Sigmoid colon (tissue), 7 donors: ENCODE measurements at regions of chr4 and their contacts with region 1.

Region 1: GRCh38 chr4:170853422-170854021 is 763.8 kb upstream of the AADAT start:
- DNase-seq: no peak
- H3K4me3 ChIP-seq: no peak overlapping the region
- H3K27ac ChIP-seq: no peak overlapping the region
- H3K4me1 ChIP-seq: no peaks in the 10 kb centered on the region
- H3K27me3 ChIP-seq: no peaks in the 10 kb centered on the region
- CTCF ChIP-seq: peak in 3 of 4 experiments; percentile 21 to 66 (median 50)
- EP300 ChIP-seq: no peak
- POLR2A ChIP-seq: no peak

Region 2: DNA sequence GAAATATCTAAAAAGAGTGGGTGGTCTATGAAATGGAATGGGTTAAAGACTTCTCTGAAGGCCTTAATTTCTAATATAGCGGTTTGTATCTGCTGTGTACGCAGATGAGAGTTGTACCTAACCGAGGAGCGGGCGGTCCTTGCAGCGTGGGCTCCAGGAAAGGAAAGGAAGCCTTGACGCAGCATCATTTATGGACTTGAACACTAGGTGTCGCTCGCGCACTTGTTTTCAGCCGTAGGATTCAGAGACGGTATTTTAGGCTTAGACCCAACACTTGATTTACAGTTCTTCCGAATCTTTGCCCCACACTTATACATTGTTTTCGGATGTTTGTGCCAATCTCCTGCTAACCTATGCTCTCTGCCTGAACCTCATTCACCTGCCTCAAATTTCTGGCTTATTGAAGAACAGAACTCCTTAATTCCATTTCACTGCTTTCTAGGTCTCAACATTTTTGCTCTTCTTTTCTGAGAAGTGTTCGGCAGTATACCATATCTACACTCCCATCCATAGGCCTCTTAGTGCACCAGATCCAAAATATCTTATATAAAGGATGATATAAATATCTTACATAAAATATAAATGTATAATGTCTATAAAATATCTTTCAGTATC is 714.8 kb before region 1 on chr4:
- intact Hi-C with region 1: loop called (anchors 2 kb)
- DNase-seq: peak; percentile 79
- H3K4me3 ChIP-seq: no peak overlapping the region
- H3K27ac ChIP-seq: no peak overlapping the region
- H3K4me1 ChIP-seq: no peaks in the 10 kb centered on the region
- H3K27me3 ChIP-seq: no peaks in the 10 kb centered on the region
- CTCF ChIP-seq: peak; percentile 28 to 76 (median 47)
- EP300 ChIP-seq: no peak
- POLR2A ChIP-seq: no peak

Region 3: GRCh38 chr4:170259631-170260153 is 593.8 kb before region 1 on chr4:
- intact Hi-C with region 1: loop called (anchors 5 kb)
- DNase-seq: peak; percentile 67
- H3K4me3 ChIP-seq: no peak overlapping the region
- H3K27ac ChIP-seq: no peak overlapping the region
- H3K4me1 ChIP-seq: no peaks in the 10 kb centered on the region
- H3K27me3 ChIP-seq: no peaks in the 10 kb centered on the region
- CTCF ChIP-seq: peak in 3 of 4 experiments; percentile 39 to 76 (median 61)
- EP300 ChIP-seq: no peak
- POLR2A ChIP-seq: no peak